Activated naive CD8-positive, alpha-beta T cell treated with anti-CD3 and anti-CD28 coated beads, Interleukin-2, amount 10 ng/mL, durations not matched to agents 7 days and 5 days (primary cell): ENCODE measurements at regions of chr17 and their contacts with region 1.

Region 1: DNA sequence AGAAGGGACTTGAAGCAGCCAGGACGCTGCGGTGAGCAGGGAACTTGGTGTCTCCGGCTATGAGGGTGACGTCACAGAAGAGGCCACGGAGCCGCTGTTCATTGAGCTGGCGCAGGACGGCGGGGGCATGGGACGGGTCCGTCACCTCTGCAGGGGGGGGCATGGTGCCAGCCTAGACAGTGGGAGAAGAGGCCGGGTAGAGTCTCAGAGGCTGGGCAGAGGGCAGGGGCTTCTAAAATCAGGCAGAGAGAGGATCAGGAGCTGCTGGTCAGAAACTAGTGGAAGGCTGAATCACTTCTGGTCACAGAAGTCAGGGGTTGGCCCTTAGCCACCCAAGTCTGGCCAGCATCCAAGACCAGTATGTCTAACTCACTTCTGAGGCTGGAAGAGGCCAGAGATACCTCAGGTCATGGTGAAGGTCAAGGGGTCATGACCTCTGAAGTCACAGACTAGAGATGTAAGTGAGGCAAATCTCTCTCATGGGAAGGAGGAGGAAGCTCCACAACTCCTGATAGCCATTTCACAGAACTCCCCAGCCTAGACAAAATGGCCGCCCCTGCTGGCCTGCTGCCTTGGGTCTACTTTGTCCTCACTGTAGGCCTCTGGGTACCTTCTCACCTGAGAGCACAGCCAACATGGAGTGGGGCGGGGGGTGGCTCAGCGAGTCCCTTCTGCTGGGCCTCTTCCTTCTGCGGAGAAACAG is 12.6 kb downstream of the ZBTB4 start:
- DNase-seq: no peak
- ATAC-seq: no peak
- H3K4me3 Mint-ChIP-seq: no peak overlapping the region
- H3K27ac Mint-ChIP-seq: peak overlapping the region; percentile 48
- H3K4me1 Mint-ChIP-seq: peaks cover 10% of the 10 kb centered on the region
- H3K27me3 Mint-ChIP-seq: no peaks in the 10 kb centered on the region

Region 2: DNA sequence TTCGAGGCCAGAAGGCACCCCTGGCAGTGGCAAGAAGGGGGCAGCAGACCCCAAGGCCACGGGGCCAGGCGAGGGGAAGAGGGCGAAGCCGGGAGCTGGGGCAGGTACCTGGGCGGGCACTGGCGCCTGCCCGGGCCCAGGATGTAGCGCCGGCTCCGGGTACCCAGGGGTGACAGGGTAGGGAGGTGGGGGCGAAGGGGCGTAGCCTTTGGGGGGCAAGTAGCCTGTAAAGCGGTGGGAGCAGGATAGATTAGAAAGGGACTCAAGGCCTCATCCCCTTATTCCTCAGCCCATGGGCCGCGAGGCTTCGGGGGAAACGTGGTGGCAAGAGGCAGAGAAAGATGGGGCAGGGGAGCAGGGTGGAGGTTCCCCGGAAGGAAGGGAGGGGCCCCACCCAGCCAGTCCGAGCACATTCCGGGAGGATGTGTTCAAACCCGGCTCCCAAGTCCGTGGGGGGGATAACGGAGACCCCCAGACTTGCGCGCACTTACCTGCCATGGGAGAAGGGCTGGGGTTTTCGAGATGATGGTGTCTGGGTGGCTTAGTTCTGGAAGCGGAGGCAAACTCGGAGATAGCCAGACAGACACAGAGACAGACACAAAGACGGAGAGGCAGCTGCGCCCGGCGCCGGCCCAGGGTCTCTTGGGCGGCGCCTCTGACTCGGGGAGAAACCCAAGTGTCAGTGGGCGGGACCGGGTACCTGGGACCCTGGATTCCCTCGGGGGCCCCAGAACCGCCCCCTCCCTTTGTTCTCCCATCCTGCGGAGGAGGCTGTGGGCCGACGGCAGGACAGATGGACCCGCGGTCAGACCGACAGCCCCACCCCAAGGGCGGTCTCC is 73.0 kb before region 1 on chr17:
- POLR2A ChIA-PET with region 1: no interaction called
- DNase-seq: peak; percentile 61
- ATAC-seq: peak; percentile 41
- H3K4me3 Mint-ChIP-seq: peak overlapping the region; percentile 95
- H3K27ac Mint-ChIP-seq: peak overlapping the region; percentile 89
- H3K4me1 Mint-ChIP-seq: peaks cover 19% of the 10 kb centered on the region
- H3K27me3 Mint-ChIP-seq: no peaks in the 10 kb centered on the region

Region 3: GRCh38 chr17:7426896-7427489 is 39.8 kb before region 1 on chr17:
- POLR2A ChIA-PET with region 1: no interaction called
- DNase-seq: no peak
- ATAC-seq: no peak
- H3K4me3 Mint-ChIP-seq: no peak overlapping the region
- H3K27ac Mint-ChIP-seq: no peak overlapping the region
- H3K4me1 Mint-ChIP-seq: peaks cover 1% of the 10 kb centered on the region
- H3K27me3 Mint-ChIP-seq: no peaks in the 10 kb centered on the region

Region 4: DNA sequence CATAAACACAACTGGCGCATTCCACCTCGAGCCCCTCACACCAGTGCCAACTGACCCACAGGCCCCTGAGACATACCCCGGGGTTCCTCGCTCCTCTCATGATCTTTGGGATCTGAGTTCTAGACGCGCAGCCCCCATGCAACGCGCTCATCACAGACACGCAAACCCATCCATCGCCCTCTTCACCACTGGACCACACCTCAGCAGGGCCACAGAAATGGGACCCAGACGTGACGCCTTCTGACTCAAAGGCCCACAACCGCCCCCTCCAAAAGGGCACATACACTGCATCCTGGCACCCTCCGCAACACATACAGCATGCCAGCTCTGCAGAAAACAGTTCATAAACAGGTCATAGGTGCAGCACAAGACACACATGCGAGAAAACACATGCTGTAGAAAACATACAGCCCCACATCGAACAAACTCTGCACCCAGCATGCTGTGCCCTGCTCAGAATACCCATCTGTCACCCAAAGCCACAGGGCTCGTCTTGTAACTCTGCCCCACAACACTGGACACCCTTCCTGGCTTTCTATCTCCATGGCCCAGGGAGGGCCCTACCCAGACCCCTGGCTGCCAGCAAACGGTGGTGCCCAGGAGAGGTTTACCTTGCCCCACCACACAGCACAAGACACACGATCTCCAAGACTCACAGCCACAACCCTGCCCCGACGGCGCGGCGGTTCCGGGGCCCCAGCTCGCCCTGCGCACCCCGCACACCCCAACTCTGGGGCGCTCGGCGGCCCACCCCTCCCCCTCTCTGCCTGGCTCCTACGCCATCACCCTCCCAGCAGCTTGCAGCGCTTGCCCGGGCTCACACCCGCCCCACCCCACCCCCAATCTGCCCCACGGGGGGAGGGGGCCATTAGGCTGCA is 11.7 kb after region 1 on chr17:
- POLR2A ChIA-PET with region 1: interaction called, 18 read pairs
- DNase-seq: peak; percentile 79
- ATAC-seq: peak; percentile 31
- H3K4me3 Mint-ChIP-seq: peak overlapping the region; percentile 95
- H3K27ac Mint-ChIP-seq: peak overlapping the region; percentile 89
- H3K4me1 Mint-ChIP-seq: peaks cover 49% of the 10 kb centered on the region
- H3K27me3 Mint-ChIP-seq: no peaks in the 10 kb centered on the region

Region 5: DNA sequence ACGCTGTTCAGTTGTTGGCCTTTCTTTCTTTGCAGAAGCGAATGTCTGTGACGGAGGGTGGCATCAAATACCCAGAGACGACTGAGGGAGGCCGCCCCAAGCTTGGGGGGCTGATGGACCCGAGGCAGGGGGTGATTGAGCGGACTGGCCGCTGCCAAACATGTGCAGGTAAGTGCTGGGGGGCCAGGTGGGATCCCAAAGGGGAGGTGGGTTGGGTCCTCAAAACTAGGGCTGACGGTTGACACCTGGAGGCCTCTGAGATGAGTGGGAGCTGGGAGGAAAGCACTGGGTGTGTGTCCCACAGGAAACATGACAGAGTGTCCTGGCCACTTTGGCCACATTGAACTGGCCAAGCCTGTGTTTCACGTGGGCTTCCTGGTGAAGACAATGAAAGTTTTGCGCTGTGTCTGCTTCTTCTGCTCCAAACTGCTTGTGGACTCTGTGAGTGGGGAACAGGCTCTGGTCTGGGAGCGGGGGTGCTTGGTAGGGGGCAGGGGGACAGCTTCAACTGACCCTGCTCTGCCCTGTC is 29.2 kb after region 1 on chr17:
- POLR2A ChIA-PET with region 1: no interaction called
- DNase-seq: no peak
- ATAC-seq: no peak
- H3K4me3 Mint-ChIP-seq: no peak overlapping the region
- H3K27ac Mint-ChIP-seq: no peak overlapping the region
- H3K4me1 Mint-ChIP-seq: peaks cover 22% of the 10 kb centered on the region
- H3K27me3 Mint-ChIP-seq: no peaks in the 10 kb centered on the region